Endothelial cell of umbilical vein (primary cell): ENCODE measurements at regions of chr5 and their contacts with region 1.

Region 1: DNA sequence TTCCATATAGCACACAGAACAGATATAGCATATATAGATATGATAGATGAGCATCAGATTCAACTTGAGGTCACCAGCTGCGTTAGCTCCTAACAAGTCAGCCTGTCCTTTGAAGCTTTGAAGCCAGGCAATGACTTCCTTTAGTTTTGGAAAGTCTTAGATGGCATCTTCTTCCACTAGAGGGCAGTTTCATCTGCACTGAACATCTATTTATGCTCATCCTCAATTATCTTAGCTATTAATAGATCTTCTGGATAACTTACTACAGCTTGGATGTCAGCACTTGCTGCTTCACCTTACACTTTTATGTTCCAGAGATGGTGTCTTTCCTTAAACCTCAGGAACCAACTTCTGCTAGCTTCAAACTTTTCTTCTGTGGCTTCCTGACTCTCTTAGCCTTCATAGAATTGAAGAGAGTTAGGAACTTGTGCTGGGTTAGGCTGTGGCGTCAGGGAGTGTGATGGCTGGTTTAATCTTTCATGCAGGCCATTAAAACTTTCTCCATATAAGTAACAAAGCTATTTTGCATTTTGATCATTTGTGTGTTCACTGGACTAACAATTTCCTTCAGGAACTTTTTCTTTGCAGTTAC is 1401.4 kb downstream of the EFNA5 start:
- DNase-seq: peak; percentile 43
- H3K4me3 ChIP-seq: no peak overlapping the region
- H3K27ac ChIP-seq: no peak overlapping the region
- H3K4me1 ChIP-seq: no peaks in the 10 kb centered on the region
- H3K27me3 ChIP-seq: no peaks in the 10 kb centered on the region
- CTCF ChIP-seq: peak; percentile 45 to 53
- POLR2A ChIP-seq: no peak

Region 2: GRCh38 chr5:106171708-106172107 is 97.6 kb before region 1 on chr5:
- CTCF ChIA-PET with region 1: no interaction called
- POLR2A ChIA-PET with region 1: no interaction called
- dilution Hi-C with region 1: no loop called
- intact Hi-C with region 1: loop called (anchors 2 kb)
- DNase-seq: peak; percentile 74
- H3K4me3 ChIP-seq: no peak overlapping the region
- H3K27ac ChIP-seq: peak overlapping the region; percentile 41
- H3K4me1 ChIP-seq: peaks cover 19% of the 10 kb centered on the region
- H3K27me3 ChIP-seq: no peaks in the 10 kb centered on the region
- CTCF ChIP-seq: no peak
- POLR2A ChIP-seq: no peak

Region 3: GRCh38 chr5:106454651-106455415 is 185.5 kb after region 1 on chr5:
- CTCF ChIA-PET with region 1: interaction called, 18 read pairs
- POLR2A ChIA-PET with region 1: no interaction called
- dilution Hi-C with region 1: no loop called
- intact Hi-C with region 1: no loop called
- DNase-seq: peak; percentile 72
- H3K4me3 ChIP-seq: no peak overlapping the region
- H3K27ac ChIP-seq: no peak overlapping the region
- H3K4me1 ChIP-seq: no peaks in the 10 kb centered on the region
- H3K27me3 ChIP-seq: no peaks in the 10 kb centered on the region
- CTCF ChIP-seq: peak; percentile 46 to 62
- POLR2A ChIP-seq: no peak

Region 4: GRCh38 chr5:106720367-106720766 is 451.0 kb after region 1 on chr5:
- CTCF ChIA-PET with region 1: no interaction called
- POLR2A ChIA-PET with region 1: no interaction called
- dilution Hi-C with region 1: no loop called
- intact Hi-C with region 1: no loop called
- DNase-seq: no peak
- H3K4me3 ChIP-seq: no peak overlapping the region
- H3K27ac ChIP-seq: no peak overlapping the region
- H3K4me1 ChIP-seq: no peaks in the 10 kb centered on the region
- H3K27me3 ChIP-seq: no peaks in the 10 kb centered on the region
- CTCF ChIP-seq: no peak
- POLR2A ChIP-seq: no peak

Region 5: GRCh38 chr5:106759581-106759980 is 490.2 kb after region 1 on chr5:
- CTCF ChIA-PET with region 1: interaction called, 3 read pairs
- POLR2A ChIA-PET with region 1: no interaction called
- dilution Hi-C with region 1: no loop called
- intact Hi-C with region 1: loop called (anchors 10 kb)
- DNase-seq: peak; percentile 8
- H3K4me3 ChIP-seq: no peak overlapping the region
- H3K27ac ChIP-seq: no peak overlapping the region
- H3K4me1 ChIP-seq: no peaks in the 10 kb centered on the region
- H3K27me3 ChIP-seq: no peaks in the 10 kb centered on the region
- CTCF ChIP-seq: no peak
- POLR2A ChIP-seq: no peak

Region 6: GRCh38 chr5:106875591-106876297 is 606.4 kb after region 1 on chr5:
- CTCF ChIA-PET with region 1: interaction called, 5 read pairs
- POLR2A ChIA-PET with region 1: no interaction called
- dilution Hi-C with region 1: no loop called
- intact Hi-C with region 1: loop called (anchors 5 kb)
- DNase-seq: no peak
- H3K4me3 ChIP-seq: no peak overlapping the region
- H3K27ac ChIP-seq: no peak overlapping the region
- H3K4me1 ChIP-seq: no peaks in the 10 kb centered on the region
- H3K27me3 ChIP-seq: no peaks in the 10 kb centered on the region
- CTCF ChIP-seq: peak; percentile 13 to 28
- POLR2A ChIP-seq: no peak

Region 7: GRCh38 chr5:107090506-107090905 is 821.2 kb after region 1 on chr5:
- CTCF ChIA-PET with region 1: no interaction called
- POLR2A ChIA-PET with region 1: no interaction called
- dilution Hi-C with region 1: no loop called
- intact Hi-C with region 1: no loop called
- DNase-seq: peak; percentile 12
- H3K4me3 ChIP-seq: no peak overlapping the region
- H3K27ac ChIP-seq: no peak overlapping the region
- H3K4me1 ChIP-seq: no peaks in the 10 kb centered on the region
- H3K27me3 ChIP-seq: no peaks in the 10 kb centered on the region
- CTCF ChIP-seq: no peak
- POLR2A ChIP-seq: no peak

Region 8: GRCh38 chr5:107359033-107359915 is 1089.9 kb after region 1 on chr5:
- CTCF ChIA-PET with region 1: interaction called, 10 read pairs
- POLR2A ChIA-PET with region 1: no interaction called
- dilution Hi-C with region 1: no loop called
- intact Hi-C with region 1: no loop called
- DNase-seq: peak; percentile 41
- H3K4me3 ChIP-seq: no peak overlapping the region
- H3K27ac ChIP-seq: no peak overlapping the region
- H3K4me1 ChIP-seq: peaks cover 7% of the 10 kb centered on the region
- H3K27me3 ChIP-seq: no peaks in the 10 kb centered on the region
- CTCF ChIP-seq: no peak
- POLR2A ChIP-seq: no peak

Region 9: DNA sequence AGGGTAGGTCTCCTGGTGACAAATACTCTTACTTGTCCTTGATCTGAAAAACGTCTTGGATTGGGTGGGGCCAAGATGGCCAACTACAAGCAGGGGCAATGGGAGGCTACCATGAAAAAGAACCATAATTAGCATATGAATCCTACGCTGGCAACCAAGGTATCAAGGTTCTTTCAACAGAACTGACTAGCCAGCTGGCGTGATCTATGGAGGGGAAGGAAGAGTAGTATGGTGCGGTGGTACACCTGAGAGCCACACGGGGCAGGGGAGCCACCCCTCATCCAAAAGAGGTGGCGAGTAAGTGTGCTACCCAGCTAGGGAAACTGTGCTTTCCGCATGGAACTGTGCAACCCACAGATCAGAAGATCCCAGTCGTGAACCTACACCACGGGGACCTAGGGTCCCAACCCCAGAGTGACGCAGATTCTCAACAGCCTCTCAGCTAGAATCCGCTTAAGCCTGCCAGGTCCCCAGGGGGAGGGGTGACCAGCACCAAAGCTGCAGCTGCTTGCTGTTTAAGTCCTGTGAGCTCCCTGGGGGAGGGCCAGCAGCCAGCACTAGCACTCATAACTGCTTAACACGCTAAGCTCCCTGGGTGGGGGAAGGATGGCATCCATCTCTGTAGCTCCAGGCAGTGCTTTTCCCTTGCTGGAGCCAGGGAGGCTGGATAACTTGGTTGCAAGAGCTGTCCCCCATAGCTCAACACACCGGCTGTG is 1777.8 kb after region 1 on chr5:
- CTCF ChIA-PET with region 1: no interaction called
- POLR2A ChIA-PET with region 1: no interaction called
- dilution Hi-C with region 1: no loop called
- intact Hi-C with region 1: no loop called
- DNase-seq: no peak
- H3K4me3 ChIP-seq: no peak overlapping the region
- H3K27ac ChIP-seq: no peak overlapping the region
- H3K4me1 ChIP-seq: no peaks in the 10 kb centered on the region
- H3K27me3 ChIP-seq: no peaks in the 10 kb centered on the region
- CTCF ChIP-seq: no peak
- POLR2A ChIP-seq: no peak